ENCODE measurements at regions of chr12 and their contacts with region 1.

Region 1: GRCh38 chr12:118372541-118373495 is at the start of gene TAOK3:
- DNase-seq: peak; percentile 98 to 99
- H3K4me3 ChIP-seq: peak within 1 kb of the TSS; percentile 74
- H3K4me3 Mint-ChIP-seq: peak within 1 kb of the TSS; percentile 93
- H3K27ac Mint-ChIP-seq: peak within 1 kb of the TSS; percentile 86
- H3K4me1 ChIP-seq: peaks cover 7% of the 10 kb centered on the region; the same call in 1 of the 2 replicates
- H3K4me1 Mint-ChIP-seq: peaks cover 7% of the 10 kb centered on the region
- H3K27me3 ChIP-seq: no peaks in the 10 kb centered on the region
- H3K27me3 Mint-ChIP-seq: no peaks in the 10 kb centered on the region
- CTCF ChIP-seq: no peak
- total RNA-seq, gene TAOK3: 16.5 and 17.7 TPM in 2 replicates

Region 2: GRCh38 chr12:118061011-118061875 is 311.6 kb before region 1 on chr12 and contains the start of gene WSB2:
- CTCF ChIA-PET with region 1: no interaction called
- POLR2A ChIA-PET with region 1: no interaction called
- intact Hi-C with region 1: loop called (anchors 2 kb)
- DNase-seq: peak; percentile 61
- H3K4me3 ChIP-seq: peak within 1 kb of the TSS; percentile 83
- H3K4me3 Mint-ChIP-seq: peak within 1 kb of the TSS; percentile 95
- H3K27ac Mint-ChIP-seq: peak within 1 kb of the TSS; percentile 99
- H3K4me1 ChIP-seq: peaks cover 44% of the 10 kb centered on the region
- H3K4me1 Mint-ChIP-seq: peaks cover 27% of the 10 kb centered on the region
- H3K27me3 ChIP-seq: no peaks in the 10 kb centered on the region
- H3K27me3 Mint-ChIP-seq: no peaks in the 10 kb centered on the region
- CTCF ChIP-seq: no peak
- total RNA-seq, gene WSB2: 36.7 and 37.6 TPM in 2 replicates

Region 3: GRCh38 chr12:118120579-118121363 is 252.0 kb before region 1 on chr12:
- CTCF ChIA-PET with region 1: interaction called, 10 read pairs
- POLR2A ChIA-PET with region 1: interaction called, 3 read pairs
- intact Hi-C with region 1: loop called (anchors 1 kb)
- DNase-seq: peak; percentile 67 to 68
- H3K4me3 ChIP-seq: no peak overlapping the region
- H3K4me3 Mint-ChIP-seq: no peak overlapping the region
- H3K27ac Mint-ChIP-seq: peak overlapping the region; percentile 69
- H3K4me1 ChIP-seq: peaks cover 14% of the 10 kb centered on the region
- H3K4me1 Mint-ChIP-seq: peaks cover 14% of the 10 kb centered on the region
- H3K27me3 ChIP-seq: no peaks in the 10 kb centered on the region
- H3K27me3 Mint-ChIP-seq: no peaks in the 10 kb centered on the region
- CTCF ChIP-seq: peak; percentile 77 to 78

Region 4: DNA sequence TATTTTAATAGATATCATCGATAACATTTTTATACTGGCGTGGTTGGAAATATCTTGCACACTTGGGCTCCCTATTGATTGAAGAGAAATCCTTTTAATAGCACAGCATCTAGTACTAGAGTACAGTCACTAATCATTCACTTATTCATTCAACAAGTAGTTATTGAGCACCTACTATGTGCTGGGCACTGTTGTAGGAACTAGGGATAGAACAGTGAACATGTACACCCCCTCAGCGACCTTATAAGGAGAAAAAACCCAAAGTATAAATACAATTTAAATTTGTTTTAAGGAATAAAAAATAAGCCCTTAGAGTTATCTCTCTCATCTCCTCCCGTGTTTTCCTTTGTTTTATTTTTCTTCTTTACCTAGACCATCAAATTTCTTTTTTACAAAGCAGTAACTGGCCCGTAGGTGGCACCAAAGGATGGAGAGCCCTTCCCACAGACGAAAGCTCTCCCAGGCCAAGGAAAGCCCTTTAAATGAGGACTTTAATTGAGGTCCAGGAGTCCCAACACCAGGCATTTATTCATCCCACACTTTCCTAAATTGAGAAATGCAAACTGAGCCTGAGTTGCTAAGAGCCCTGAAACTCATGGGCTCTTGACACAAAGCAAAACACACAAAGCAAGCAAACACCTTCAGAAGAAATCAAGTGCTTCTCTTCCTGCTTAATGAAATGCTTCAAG is 207.9 kb before region 1 on chr12:
- CTCF ChIA-PET with region 1: interaction called, 5 read pairs
- POLR2A ChIA-PET with region 1: no interaction called
- intact Hi-C with region 1: loop called (anchors 1 kb)
- DNase-seq: peak in 1 of 2 experiments; percentile 37
- H3K4me3 ChIP-seq: no peak overlapping the region
- H3K4me3 Mint-ChIP-seq: no peak overlapping the region
- H3K27ac Mint-ChIP-seq: no peak overlapping the region
- H3K4me1 ChIP-seq: no peaks in the 10 kb centered on the region
- H3K4me1 Mint-ChIP-seq: no peaks in the 10 kb centered on the region
- H3K27me3 ChIP-seq: no peaks in the 10 kb centered on the region
- H3K27me3 Mint-ChIP-seq: no peaks in the 10 kb centered on the region
- CTCF ChIP-seq: peak; percentile 29 to 57

Region 5: GRCh38 chr12:118183705-118184104 is 189.1 kb before region 1 on chr12:
- CTCF ChIA-PET with region 1: interaction called, 5 read pairs
- POLR2A ChIA-PET with region 1: no interaction called
- intact Hi-C with region 1: loop called (anchors 1 kb)
- DNase-seq: no peak
- H3K4me3 ChIP-seq: no peak overlapping the region
- H3K4me3 Mint-ChIP-seq: no peak overlapping the region
- H3K27ac Mint-ChIP-seq: no peak overlapping the region
- H3K4me1 ChIP-seq: no peaks in the 10 kb centered on the region
- H3K4me1 Mint-ChIP-seq: peaks cover 7% of the 10 kb centered on the region
- H3K27me3 ChIP-seq: no peaks in the 10 kb centered on the region
- H3K27me3 Mint-ChIP-seq: no peaks in the 10 kb centered on the region
- CTCF ChIP-seq: no peak

Region 6: DNA sequence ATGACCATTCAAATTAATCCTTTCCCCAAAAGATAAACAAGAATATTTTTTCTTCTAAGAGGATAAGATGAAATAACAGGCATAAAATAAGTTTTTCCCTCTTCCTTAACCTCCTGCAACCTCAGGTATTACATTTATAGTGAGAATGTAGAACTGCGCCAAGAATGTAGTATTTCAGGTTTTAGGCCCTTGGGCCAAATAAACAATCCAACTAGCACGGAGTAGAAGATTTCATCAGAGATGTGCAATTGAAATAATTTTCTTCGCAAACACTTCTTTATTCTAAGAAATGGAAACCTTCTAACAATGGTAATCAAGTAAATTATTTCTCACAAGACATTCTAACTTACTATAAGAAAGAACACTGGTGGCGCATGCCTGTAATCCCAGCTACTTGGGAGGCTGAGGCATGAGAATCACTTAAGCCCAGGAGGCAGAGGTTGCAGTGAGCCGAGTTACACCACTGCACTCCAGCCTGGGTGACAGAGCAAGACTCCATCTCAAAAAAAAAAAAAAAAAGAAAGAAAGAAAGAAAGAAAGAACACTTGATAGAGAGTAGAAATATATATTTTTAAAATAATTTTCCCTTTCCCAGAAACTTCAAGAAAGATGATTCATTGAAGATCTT is 100.9 kb before region 1 on chr12:
- CTCF ChIA-PET with region 1: interaction called, 5 read pairs
- POLR2A ChIA-PET with region 1: no interaction called
- intact Hi-C with region 1: loop called (anchors 1 kb)
- DNase-seq: peak; percentile 54 to 79
- H3K4me3 ChIP-seq: no peak overlapping the region
- H3K4me3 Mint-ChIP-seq: peak overlapping the region; percentile 63
- H3K27ac Mint-ChIP-seq: peak overlapping the region; percentile 89
- H3K4me1 ChIP-seq: peaks cover 32% of the 10 kb centered on the region
- H3K4me1 Mint-ChIP-seq: peaks cover 26% of the 10 kb centered on the region
- H3K27me3 ChIP-seq: no peaks in the 10 kb centered on the region
- H3K27me3 Mint-ChIP-seq: no peaks in the 10 kb centered on the region
- CTCF ChIP-seq: no peak

Region 7: GRCh38 chr12:118347916-118348315 is 24.9 kb before region 1 on chr12:
- CTCF ChIA-PET with region 1: no interaction called
- POLR2A ChIA-PET with region 1: interaction called, 10 read pairs
- intact Hi-C with region 1: no loop called
- DNase-seq: no peak
- H3K4me3 ChIP-seq: no peak overlapping the region
- H3K4me3 Mint-ChIP-seq: peak overlapping the region; percentile 17
- H3K27ac Mint-ChIP-seq: peak overlapping the region; percentile 82
- H3K4me1 ChIP-seq: peaks cover 17% of the 10 kb centered on the region
- H3K4me1 Mint-ChIP-seq: peaks cover 16% of the 10 kb centered on the region
- H3K27me3 ChIP-seq: no peaks in the 10 kb centered on the region
- H3K27me3 Mint-ChIP-seq: no peaks in the 10 kb centered on the region
- CTCF ChIP-seq: no peak

Region 8: GRCh38 chr12:118409834-118410233 is 37.0 kb after region 1 on chr12:
- CTCF ChIA-PET with region 1: no interaction called
- POLR2A ChIA-PET with region 1: no interaction called
- intact Hi-C with region 1: no loop called
- DNase-seq: no peak
- H3K4me3 ChIP-seq: no peak overlapping the region
- H3K4me3 Mint-ChIP-seq: no peak overlapping the region
- H3K27ac Mint-ChIP-seq: no peak overlapping the region
- H3K4me1 ChIP-seq: no peaks in the 10 kb centered on the region
- H3K4me1 Mint-ChIP-seq: no peaks in the 10 kb centered on the region
- H3K27me3 ChIP-seq: no peaks in the 10 kb centered on the region
- H3K27me3 Mint-ChIP-seq: no peaks in the 10 kb centered on the region
- CTCF ChIP-seq: no peak